Psoas muscle (tissue), 8 donors: ENCODE measurements at regions of chr12 and their contacts with region 1.

Region 1: GRCh38 chr12:58346032-58346632 is 404.8 kb downstream of the ATP23 start:
- DNase-seq: no peak
- ATAC-seq: peak; percentile 54 to 80 (median 61)
- H3K4me3 ChIP-seq: no peak overlapping the region
- H3K27ac ChIP-seq: no peak overlapping the region
- H3K4me1 ChIP-seq: peaks cover 4% of the 10 kb centered on the region
- H3K27me3 ChIP-seq: no peaks in the 10 kb centered on the region
- CTCF ChIP-seq: peak; percentile 87

Region 2: GRCh38 chr12:57983146-57983857 is 362.8 kb before region 1 on chr12:
- intact Hi-C with region 1: loop called (anchors 5 kb)
- DNase-seq: no peak
- ATAC-seq: peak in 1 of 4 donors; percentile 66
- H3K4me3 ChIP-seq: no peak overlapping the region
- H3K27ac ChIP-seq: no peak overlapping the region
- H3K4me1 ChIP-seq: peaks cover 5% of the 10 kb centered on the region
- H3K27me3 ChIP-seq: no peaks in the 10 kb centered on the region
- CTCF ChIP-seq: peak; percentile 74

Region 3: DNA sequence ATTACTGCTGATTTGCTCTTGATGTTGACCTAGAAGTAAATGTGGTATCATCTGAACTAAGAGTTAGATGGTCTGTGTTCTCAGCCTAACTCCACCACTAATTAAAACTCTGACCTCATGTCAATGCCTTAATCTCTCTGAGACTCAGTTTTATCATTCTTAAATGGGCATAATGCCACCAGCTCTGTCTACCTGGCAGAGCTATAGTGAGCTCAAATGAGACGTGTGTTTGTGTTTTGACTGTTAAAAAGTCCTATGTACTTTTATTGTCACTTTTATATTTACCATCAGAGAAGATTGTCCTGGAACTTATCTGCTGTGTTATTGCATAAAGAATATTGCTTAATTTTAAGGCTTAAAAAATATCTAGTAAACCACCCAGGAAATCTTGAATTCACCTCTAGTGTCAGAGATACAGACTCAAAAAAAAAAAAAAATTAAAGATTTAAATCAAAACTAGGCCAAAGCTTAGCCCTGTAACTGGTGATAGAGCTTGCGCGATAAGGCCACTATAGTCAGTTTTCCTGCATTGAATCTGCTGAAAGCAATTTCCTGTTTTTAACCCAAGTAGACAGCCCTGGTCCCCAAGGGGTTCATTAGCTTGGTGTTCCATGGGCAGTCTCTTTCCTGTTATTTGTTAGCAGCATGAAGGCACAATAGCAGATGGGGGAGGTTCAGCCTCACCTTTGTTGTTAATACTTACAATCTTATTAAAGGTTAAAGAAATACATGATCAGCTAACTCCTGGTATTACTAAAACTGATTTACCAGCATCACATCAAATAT is 143.0 kb before region 1 on chr12:
- intact Hi-C with region 1: no loop called
- DNase-seq: no peak
- ATAC-seq: no peak
- H3K4me3 ChIP-seq: no peak overlapping the region
- H3K27ac ChIP-seq: no peak overlapping the region
- H3K4me1 ChIP-seq: no peaks in the 10 kb centered on the region
- H3K27me3 ChIP-seq: no peaks in the 10 kb centered on the region
- CTCF ChIP-seq: no peak

Region 4: GRCh38 chr12:58443273-58443980 is 97.3 kb after region 1 on chr12:
- intact Hi-C with region 1: loop called in 1 of 2 experiments (anchors 5 kb)
- DNase-seq: no peak
- ATAC-seq: peak; percentile 55 to 85 (median 70)
- H3K4me3 ChIP-seq: no peak overlapping the region
- H3K27ac ChIP-seq: peak overlapping the region; percentile 72
- H3K4me1 ChIP-seq: no peaks in the 10 kb centered on the region
- H3K27me3 ChIP-seq: no peaks in the 10 kb centered on the region
- CTCF ChIP-seq: peak; percentile 39

Region 5: GRCh38 chr12:58540480-58541299 is 194.6 kb after region 1 on chr12:
- intact Hi-C with region 1: loop called in 1 of 2 experiments (anchors 5 kb)
- DNase-seq: peak; percentile 58 to 64
- ATAC-seq: peak; percentile 80 to 88 (median 84)
- H3K4me3 ChIP-seq: no peak overlapping the region
- H3K27ac ChIP-seq: no peak overlapping the region
- H3K4me1 ChIP-seq: no peaks in the 10 kb centered on the region
- H3K27me3 ChIP-seq: no peaks in the 10 kb centered on the region
- CTCF ChIP-seq: peak; percentile 78

Region 6: GRCh38 chr12:59149997-59150642 is 804.0 kb after region 1 on chr12:
- intact Hi-C with region 1: loop called (anchors 5 kb)
- DNase-seq: no peak
- ATAC-seq: peak; percentile 84 to 94 (median 92)
- H3K4me3 ChIP-seq: no peak overlapping the region
- H3K27ac ChIP-seq: no peak overlapping the region
- H3K4me1 ChIP-seq: no peaks in the 10 kb centered on the region
- H3K27me3 ChIP-seq: no peaks in the 10 kb centered on the region
- CTCF ChIP-seq: peak; percentile 92

Region 7: DNA sequence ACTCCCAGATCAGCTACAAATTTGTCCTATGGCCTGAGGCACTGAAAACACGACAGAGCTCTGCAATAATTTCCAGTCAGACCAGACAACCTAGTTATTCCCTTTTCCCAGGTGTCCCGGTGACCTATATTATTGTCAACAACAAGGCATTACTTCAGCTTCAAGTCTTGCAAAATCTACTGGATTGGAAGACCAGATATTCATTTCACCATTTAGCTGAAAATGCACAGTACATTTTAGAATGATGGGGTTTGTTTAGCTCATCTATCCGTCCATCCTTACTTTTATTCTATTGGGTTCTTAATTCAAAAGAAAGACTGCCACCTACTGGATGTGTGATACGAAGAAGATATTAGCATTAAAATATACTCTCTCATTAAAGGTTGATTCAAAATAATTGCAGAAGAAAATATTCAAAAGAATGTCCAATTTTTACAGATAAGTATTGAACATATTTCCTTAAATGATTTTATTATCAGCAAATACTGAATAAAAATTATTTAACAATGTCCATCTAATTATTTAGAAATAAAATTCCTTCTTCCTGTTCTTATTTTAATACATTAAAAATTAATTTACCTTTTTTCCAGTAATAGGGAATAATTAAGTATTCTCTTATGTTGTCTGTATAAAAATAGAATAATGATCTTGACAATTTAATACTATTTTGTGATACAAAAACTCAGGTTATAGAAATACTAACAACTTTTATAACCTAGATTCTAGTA is 819.0 kb after region 1 on chr12:
- intact Hi-C with region 1: loop called in 1 of 2 experiments (anchors 5 kb)
- DNase-seq: no peak
- ATAC-seq: no peak
- H3K4me3 ChIP-seq: no peak overlapping the region
- H3K27ac ChIP-seq: no peak overlapping the region
- H3K4me1 ChIP-seq: no peaks in the 10 kb centered on the region
- H3K27me3 ChIP-seq: no peaks in the 10 kb centered on the region
- CTCF ChIP-seq: peak; percentile 39